ENCODE measurements at regions of chr2 and their contacts with region 1.

Region 1: GRCh38 chr2:47198985-47199451 is 43.9 kb upstream of the STPG4 start:
- H3K4me3 ChIP-seq: no peak overlapping the region
- H3K27ac ChIP-seq: no peak overlapping the region
- H3K4me1 ChIP-seq: peaks cover 14% of the 10 kb centered on the region
- CTCF ChIP-seq: no peak

Region 2: DNA sequence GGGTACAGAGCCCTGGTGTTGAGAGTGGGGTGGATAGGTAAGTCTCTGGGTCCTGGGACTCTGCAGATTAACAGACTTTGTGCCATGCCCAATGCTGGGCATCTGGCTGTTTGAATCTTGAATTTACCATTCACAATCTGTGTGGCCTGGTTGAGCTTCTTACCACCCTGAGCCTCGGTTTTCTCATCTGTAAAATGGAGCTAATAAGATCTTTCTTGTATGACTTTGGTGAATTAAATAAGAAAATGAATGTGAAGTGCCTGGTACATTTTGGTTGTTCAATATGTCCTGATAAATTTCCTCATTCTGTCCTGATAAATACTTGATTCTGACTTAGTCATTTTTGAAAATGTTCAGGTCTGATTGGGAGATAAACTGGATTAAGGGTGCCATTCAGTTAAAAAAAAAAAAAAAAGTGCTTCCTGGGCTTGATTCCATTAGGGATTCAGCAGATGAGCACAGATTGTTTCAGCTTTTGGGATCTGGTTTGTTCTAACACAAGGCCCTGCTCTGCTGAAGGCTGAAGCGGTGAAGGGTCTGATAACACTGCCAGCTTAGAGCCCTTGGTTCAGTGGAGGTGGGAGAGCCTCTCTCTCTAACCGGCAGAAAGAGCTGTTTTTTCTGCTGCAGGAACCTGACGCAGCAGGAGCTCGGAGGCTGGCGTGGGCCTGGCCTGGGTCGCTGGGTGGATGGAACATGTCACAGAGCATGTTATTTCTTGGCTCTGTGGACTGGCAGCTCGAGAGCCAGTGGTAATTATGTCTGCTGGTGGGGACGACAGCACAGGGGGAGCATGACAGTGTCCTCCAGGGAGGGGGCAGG is 198.9 kb before region 1 on chr2:
- CTCF ChIA-PET with region 1: no interaction called
- POLR2A ChIA-PET with region 1: no interaction called
- H3K4me3 ChIP-seq: no peak overlapping the region
- H3K27ac ChIP-seq: no peak overlapping the region
- H3K4me1 ChIP-seq: no peaks in the 10 kb centered on the region
- CTCF ChIP-seq: no peak

Region 3: DNA sequence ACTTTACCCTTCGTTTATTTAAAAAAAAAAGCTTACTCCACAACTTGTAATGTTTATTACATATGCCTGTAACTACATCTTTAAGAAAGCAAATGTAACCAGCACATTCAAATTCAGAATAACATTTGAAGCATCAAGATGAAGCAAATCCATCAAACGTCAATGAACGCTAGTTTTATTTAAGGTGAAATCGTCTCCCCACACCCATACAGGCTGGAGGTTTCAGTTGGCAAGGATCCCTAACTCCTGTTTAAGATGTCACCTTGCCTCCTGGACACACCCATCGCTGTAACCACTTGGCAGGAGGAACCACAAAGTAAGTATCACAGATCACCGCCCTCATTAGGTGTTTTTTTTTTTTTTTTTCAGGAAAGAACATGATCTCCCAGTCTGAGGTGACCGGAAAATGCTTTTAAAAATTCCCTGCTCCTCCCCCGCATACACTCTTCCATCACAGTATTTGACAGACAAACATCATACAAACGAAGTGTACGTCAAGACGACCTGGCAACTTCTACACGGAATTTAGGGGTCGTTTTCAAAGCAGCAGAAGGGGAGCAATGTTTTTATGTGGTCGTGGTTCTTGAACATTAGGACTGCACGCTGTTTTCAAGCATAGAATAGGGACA is 24.2 kb before region 1 on chr2:
- CTCF ChIA-PET with region 1: interaction called, 3 read pairs
- POLR2A ChIA-PET with region 1: interaction called, 13 read pairs
- H3K4me3 ChIP-seq: peak overlapping the region; percentile 92
- H3K27ac ChIP-seq: peak overlapping the region; percentile 97
- H3K4me1 ChIP-seq: peaks cover 27% of the 10 kb centered on the region
- CTCF ChIP-seq: no peak

Region 4: GRCh38 chr2:47208852-47209606 is 10.0 kb after region 1 on chr2:
- CTCF ChIA-PET with region 1: interaction called, 4 read pairs
- POLR2A ChIA-PET with region 1: interaction called, 12 read pairs
- H3K4me3 ChIP-seq: no peak overlapping the region
- H3K27ac ChIP-seq: peak overlapping the region; percentile 51; the same call in 1 of the 2 replicates
- H3K4me1 ChIP-seq: peaks cover 7% of the 10 kb centered on the region
- CTCF ChIP-seq: no peak

Measured in HEK293 (cell line).